ENCODE measurements at regions of chr17 and their contacts with region 1.

Region 1: GRCh38 chr17:78736526-78737079 is 45.5 kb downstream of the CYTH1 start:
- DNase-seq: peak; percentile 79
- ATAC-seq: peak; percentile 84
- H3K4me3 Mint-ChIP-seq: peak overlapping the region; percentile 80
- H3K27ac Mint-ChIP-seq: peak overlapping the region; percentile 90
- H3K4me1 Mint-ChIP-seq: peaks cover 89% of the 10 kb centered on the region
- H3K27me3 Mint-ChIP-seq: no peaks in the 10 kb centered on the region

Region 2: GRCh38 chr17:78383725-78384471 is 352.7 kb before region 1 on chr17:
- CTCF ChIA-PET with region 1: no interaction called
- POLR2A ChIA-PET with region 1: no interaction called
- intact Hi-C with region 1: loop called in 1 of 2 experiments (anchors 5 kb)
- DNase-seq: peak; percentile 86
- ATAC-seq: peak; percentile 42
- H3K4me3 Mint-ChIP-seq: peak overlapping the region; percentile 88
- H3K27ac Mint-ChIP-seq: peak overlapping the region; percentile 98
- H3K4me1 Mint-ChIP-seq: peaks cover 89% of the 10 kb centered on the region
- H3K27me3 Mint-ChIP-seq: no peaks in the 10 kb centered on the region

Region 3: DNA sequence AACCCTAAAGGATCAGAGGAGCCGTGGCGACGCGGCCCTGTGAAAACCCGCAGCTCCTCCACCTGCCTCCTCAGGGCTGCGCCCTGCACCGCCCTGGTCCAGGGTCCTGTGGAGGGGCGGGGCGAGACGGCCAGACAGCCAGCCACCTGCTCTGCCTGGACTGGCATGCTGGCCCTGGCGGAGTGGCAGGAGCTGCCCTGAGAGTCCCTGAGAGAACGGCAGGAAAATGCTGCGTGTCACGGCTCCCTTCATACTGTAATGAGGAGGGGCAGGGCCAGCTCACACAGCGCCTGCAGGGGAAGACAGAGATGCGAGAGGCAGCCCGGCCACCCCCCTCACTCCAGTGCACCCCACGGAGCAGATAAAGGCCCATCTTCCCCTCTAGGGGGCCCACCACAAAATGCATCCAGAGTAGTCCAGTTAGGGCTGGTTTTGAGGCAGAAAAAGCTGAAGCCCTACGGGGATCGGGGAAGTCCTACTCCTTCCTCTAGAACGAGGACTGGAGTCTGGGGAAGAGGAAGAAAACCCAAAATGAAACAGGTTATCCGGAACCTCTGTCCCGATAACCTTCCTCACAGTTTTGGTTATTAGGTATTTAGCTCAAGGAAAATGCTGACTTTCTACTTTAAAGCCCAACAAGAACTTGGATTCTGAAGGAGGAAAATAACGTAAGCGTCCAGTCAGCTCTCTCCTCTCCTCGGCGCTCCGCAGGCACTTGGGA is 61.8 kb before region 1 on chr17:
- CTCF ChIA-PET with region 1: no interaction called
- POLR2A ChIA-PET with region 1: no interaction called
- intact Hi-C with region 1: no loop called
- DNase-seq: no peak
- ATAC-seq: no peak
- H3K4me3 Mint-ChIP-seq: no peak overlapping the region
- H3K27ac Mint-ChIP-seq: peak overlapping the region; percentile 32
- H3K4me1 Mint-ChIP-seq: no peaks in the 10 kb centered on the region
- H3K27me3 Mint-ChIP-seq: no peaks in the 10 kb centered on the region

Region 4: GRCh38 chr17:78708510-78708973 is 28.1 kb before region 1 on chr17:
- CTCF ChIA-PET with region 1: interaction called, 47 read pairs
- POLR2A ChIA-PET with region 1: interaction called, 4 read pairs
- intact Hi-C with region 1: no loop called
- DNase-seq: peak; percentile 82
- ATAC-seq: peak; percentile 77
- H3K4me3 Mint-ChIP-seq: peak overlapping the region; percentile 49
- H3K27ac Mint-ChIP-seq: peak overlapping the region; percentile 86
- H3K4me1 Mint-ChIP-seq: peaks cover 67% of the 10 kb centered on the region
- H3K27me3 Mint-ChIP-seq: no peaks in the 10 kb centered on the region

Region 5: GRCh38 chr17:78716814-78717393 is 19.7 kb before region 1 on chr17:
- CTCF ChIA-PET with region 1: interaction called, 25 read pairs
- POLR2A ChIA-PET with region 1: no interaction called
- intact Hi-C with region 1: loop called in 1 of 2 experiments (anchors 2 kb)
- DNase-seq: peak; percentile 67
- ATAC-seq: peak; percentile 17
- H3K4me3 Mint-ChIP-seq: peak overlapping the region; percentile 43
- H3K27ac Mint-ChIP-seq: peak overlapping the region; percentile 83
- H3K4me1 Mint-ChIP-seq: peaks cover 90% of the 10 kb centered on the region
- H3K27me3 Mint-ChIP-seq: no peaks in the 10 kb centered on the region

Region 6: GRCh38 chr17:78723001-78723796 is 13.4 kb before region 1 on chr17:
- CTCF ChIA-PET with region 1: interaction called, 15 read pairs
- POLR2A ChIA-PET with region 1: interaction called, 12 read pairs
- intact Hi-C with region 1: loop called in 1 of 2 experiments (anchors 2 kb)
- DNase-seq: no peak
- ATAC-seq: no peak
- H3K4me3 Mint-ChIP-seq: no peak overlapping the region
- H3K27ac Mint-ChIP-seq: peak overlapping the region; percentile 83
- H3K4me1 Mint-ChIP-seq: peaks cover 94% of the 10 kb centered on the region
- H3K27me3 Mint-ChIP-seq: no peaks in the 10 kb centered on the region

Region 7: DNA sequence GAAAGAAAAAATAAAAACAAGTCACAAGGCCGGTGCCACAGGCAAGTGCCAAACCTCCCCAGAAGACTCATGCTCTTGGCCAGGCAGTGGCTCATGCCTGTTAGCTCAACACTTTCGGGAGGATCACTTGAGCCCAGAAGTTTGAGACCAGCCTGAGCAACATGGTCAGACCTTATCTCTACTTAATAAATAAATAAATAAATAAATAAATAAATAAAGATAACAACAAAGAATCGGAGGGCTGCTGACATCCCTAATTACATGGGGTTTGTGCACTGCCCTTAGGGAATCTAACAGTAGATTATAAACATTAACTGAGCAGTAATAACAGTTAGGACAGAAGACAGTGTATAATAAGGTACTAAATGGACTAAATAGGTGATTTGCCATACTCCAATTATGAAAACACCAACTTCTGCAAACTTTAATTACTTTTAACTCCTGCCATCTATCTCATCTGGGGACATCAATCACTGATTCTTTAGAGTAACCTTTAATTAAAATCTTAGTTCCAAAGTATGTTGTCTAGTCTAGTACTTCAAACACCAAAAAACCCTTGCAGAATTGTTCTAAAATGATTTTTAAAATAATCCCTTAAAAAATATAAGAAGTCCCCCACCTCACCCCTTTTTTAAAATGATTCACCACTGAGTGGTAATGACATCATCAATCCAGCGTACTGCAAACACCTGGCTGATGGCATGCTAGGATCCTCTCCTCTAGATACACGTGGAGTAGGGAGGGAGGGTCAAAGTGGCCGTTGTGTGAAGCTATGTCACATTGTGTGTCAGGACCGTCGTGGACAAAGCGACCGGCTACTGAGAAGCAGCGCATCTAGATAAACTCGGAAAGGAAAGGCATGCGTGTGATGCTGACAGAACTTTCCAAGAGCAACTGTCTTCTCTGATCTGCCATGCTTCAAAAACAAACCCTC is 17.0 kb after region 1 on chr17:
- CTCF ChIA-PET with region 1: interaction called, 54 read pairs
- POLR2A ChIA-PET with region 1: interaction called, 15 read pairs
- intact Hi-C with region 1: loop called in 1 of 2 experiments (anchors 2 kb)
- DNase-seq: peak; percentile 58
- ATAC-seq: peak; percentile 48
- H3K4me3 Mint-ChIP-seq: peak overlapping the region; percentile 53
- H3K27ac Mint-ChIP-seq: peak overlapping the region; percentile 92
- H3K4me1 Mint-ChIP-seq: peaks cover 94% of the 10 kb centered on the region
- H3K27me3 Mint-ChIP-seq: no peaks in the 10 kb centered on the region

Region 8: GRCh38 chr17:78774956-78775571 is 38.5 kb after region 1 on chr17:
- CTCF ChIA-PET with region 1: no interaction called
- POLR2A ChIA-PET with region 1: interaction called, 4 read pairs
- intact Hi-C with region 1: loop called (anchors 5 kb)
- DNase-seq: peak; percentile 86
- ATAC-seq: peak; percentile 67
- H3K4me3 Mint-ChIP-seq: peak overlapping the region; percentile 84
- H3K27ac Mint-ChIP-seq: peak overlapping the region; percentile 100
- H3K4me1 Mint-ChIP-seq: peaks cover 68% of the 10 kb centered on the region
- H3K27me3 Mint-ChIP-seq: no peaks in the 10 kb centered on the region

Measured in activated CD4-positive, alpha-beta T cell treated with anti-CD3 and anti-CD28 coated beads for 36 hours (primary cell).